H1 (cell line): ENCODE measurements at regions of chr3 and their contacts with region 1.

Region 1: DNA sequence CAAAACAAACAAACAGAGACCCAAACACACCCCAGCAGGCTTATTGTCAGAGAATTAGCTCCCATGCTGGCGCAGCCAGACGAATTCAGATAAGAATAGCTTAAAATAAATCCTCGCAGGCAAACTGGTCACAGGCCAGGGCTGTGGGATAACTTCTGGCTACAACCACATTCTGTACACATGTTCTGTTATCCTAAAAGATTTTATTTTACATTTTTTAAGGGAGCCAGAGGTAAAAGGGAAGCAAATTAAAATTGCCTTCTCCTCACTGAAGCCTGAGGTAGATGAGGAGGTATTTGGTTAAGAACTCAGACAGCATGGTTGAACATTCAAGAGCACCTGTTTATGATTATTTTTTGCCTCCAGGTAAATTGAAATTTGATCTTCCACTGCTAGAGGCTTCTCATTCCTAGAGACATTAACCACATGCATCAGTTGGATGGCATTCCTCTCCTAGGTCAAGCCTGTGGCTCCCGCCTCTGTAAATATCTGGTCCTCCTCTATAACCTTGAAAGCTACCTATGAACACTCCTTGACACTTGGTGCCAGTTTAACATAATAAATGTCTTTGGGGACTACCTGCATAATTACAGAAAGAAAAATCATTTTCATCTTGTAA is 190.3 kb downstream of the SATB1 start:
- DNase-seq: no peak
- H3K4me3 ChIP-seq: no peak overlapping the region
- H3K27ac ChIP-seq: no peak overlapping the region
- H3K4me1 ChIP-seq: peaks cover 0 to 12% (median 5%) of the 10 kb centered on the region in 4 experiments; a peak in 3 of 7 replicates
- H3K27me3 ChIP-seq: no peaks in the 10 kb centered on the region
- CTCF ChIP-seq: no peak
- EP300 ChIP-seq: no peak
- POLR2A ChIP-seq: no peak
- RAD21 ChIP-seq: no peak

Region 2: GRCh38 chr3:18224426-18224825 is 10.4 kb before region 1 on chr3:
- CTCF ChIA-PET with region 1: interaction called, 10 read pairs
- POLR2A ChIA-PET with region 1: interaction called, 3 read pairs
- DNase-seq: no peak
- H3K4me3 ChIP-seq: no peak overlapping the region
- H3K27ac ChIP-seq: no peak overlapping the region
- H3K4me1 ChIP-seq: no peaks in the 10 kb centered on the region; a peak in 1 of 7 replicates
- H3K27me3 ChIP-seq: no peaks in the 10 kb centered on the region
- CTCF ChIP-seq: no peak
- EP300 ChIP-seq: no peak
- POLR2A ChIP-seq: no peak
- RAD21 ChIP-seq: no peak